CD4-positive, alpha-beta memory T cell (primary cell): ENCODE measurements at regions of chr3 and their contacts with region 1.

Region 1: GRCh38 chr3:154323891-154324738 is at the start of gene DHX36:
- DNase-seq: peak; percentile 88 to 91 (median 90)
- H3K4me3 ChIP-seq: peak within 1 kb of the TSS; percentile 86 to 89
- H3K4me3 Mint-ChIP-seq: peak within 1 kb of the TSS in 7 of 8 donors; percentile 95 to 99 (median 98)
- H3K27ac ChIP-seq: peak within 1 kb of the TSS; percentile 89
- H3K27ac Mint-ChIP-seq: peak within 1 kb of the TSS; percentile 99 to 100 (median 99)
- H3K4me1 ChIP-seq: peaks cover 49% of the 10 kb centered on the region
- H3K4me1 Mint-ChIP-seq: peaks cover 9 to 20% (median 14%) of the 10 kb centered on the region in 4 donors
- H3K27me3 ChIP-seq: no peaks in the 10 kb centered on the region
- H3K27me3 Mint-ChIP-seq: peaks cover 0 to 2% of the 10 kb centered on the region in 2 donors
- total RNA-seq, gene DHX36: 91.8 to 101 TPM

Region 2: DNA sequence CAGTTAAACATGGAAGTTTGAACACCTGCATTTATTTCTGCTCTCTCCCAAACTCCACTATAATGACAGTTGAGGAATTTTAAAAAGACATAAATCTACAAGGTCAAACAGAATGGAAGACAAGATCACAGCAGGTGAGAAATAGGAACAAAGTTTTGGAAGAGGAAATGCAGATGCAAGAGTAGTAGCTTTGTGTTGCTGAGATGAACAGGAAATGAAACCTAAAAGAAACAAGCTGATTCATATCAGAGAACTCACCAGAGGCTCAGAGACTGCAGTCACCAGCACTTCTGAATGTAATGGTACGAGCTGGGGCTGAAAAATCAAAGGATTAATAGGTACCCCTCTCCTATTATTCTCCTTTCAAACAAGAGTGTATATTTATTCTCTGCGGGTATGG is 702.2 kb before region 1 on chr3:
- CTCF ChIA-PET with region 1: no interaction called
- POLR2A ChIA-PET with region 1: no interaction called
- intact Hi-C with region 1: loop called (anchors 10 kb)
- DNase-seq: peak in 4 of 5 donors; percentile 21 to 40 (median 32)
- H3K4me3 ChIP-seq: peak overlapping the region in 1 of 2 donors; percentile 38
- H3K4me3 Mint-ChIP-seq: peak overlapping the region; percentile 46 to 84 (median 66)
- H3K27ac ChIP-seq: peak overlapping the region; percentile 14
- H3K27ac Mint-ChIP-seq: peak overlapping the region; percentile 43 to 92 (median 75)
- H3K4me1 ChIP-seq: peaks cover 60% of the 10 kb centered on the region
- H3K4me1 Mint-ChIP-seq: peaks cover 46 to 61% (median 55%) of the 10 kb centered on the region in 4 donors
- H3K27me3 ChIP-seq: no peaks in the 10 kb centered on the region
- H3K27me3 Mint-ChIP-seq: no peaks in the 10 kb centered on the region

Region 3: GRCh38 chr3:154120961-154121700 is 203.0 kb before region 1 on chr3 and contains the start of gene ARHGEF26:
- CTCF ChIA-PET with region 1: no interaction called
- POLR2A ChIA-PET with region 1: no interaction called
- intact Hi-C with region 1: loop called (anchors 5 kb)
- DNase-seq: peak; percentile 36 to 76 (median 63)
- H3K4me3 ChIP-seq: peak within 1 kb of the TSS; percentile 18 to 49
- H3K4me3 Mint-ChIP-seq: peak within 1 kb of the TSS; percentile 77 to 92 (median 84)
- H3K27ac ChIP-seq: no peak within 1 kb of the TSS
- H3K27ac Mint-ChIP-seq: peak within 1 kb of the TSS in 2 of 7 donors; percentile 17 to 32
- H3K4me1 ChIP-seq: peaks cover 16% of the 10 kb centered on the region
- H3K4me1 Mint-ChIP-seq: peaks cover 13 to 29% (median 19%) of the 10 kb centered on the region in 4 donors
- H3K27me3 ChIP-seq: peaks cover 10% of the 10 kb centered on the region
- H3K27me3 Mint-ChIP-seq: peaks cover 43 to 52% of the 10 kb centered on the region in 2 donors
- total RNA-seq, gene ARHGEF26: 0.14 to 0.17 TPM

Region 4: GRCh38 chr3:155854141-155854940 is 1530.2 kb after region 1 on chr3 and contains the start of gene SLC33A1:
- CTCF ChIA-PET with region 1: no interaction called
- POLR2A ChIA-PET with region 1: no interaction called
- intact Hi-C with region 1: loop called (anchors 1 kb)
- DNase-seq: peak; percentile 99
- H3K4me3 ChIP-seq: peak within 1 kb of the TSS; percentile 98
- H3K4me3 Mint-ChIP-seq: peak within 1 kb of the TSS; percentile 89 to 98 (median 96)
- H3K27ac ChIP-seq: peak within 1 kb of the TSS; percentile 77
- H3K27ac Mint-ChIP-seq: peak within 1 kb of the TSS; percentile 94 to 100 (median 99)
- H3K4me1 ChIP-seq: peaks cover 44% of the 10 kb centered on the region
- H3K4me1 Mint-ChIP-seq: peaks cover 27 to 58% (median 38%) of the 10 kb centered on the region in 4 donors
- H3K27me3 ChIP-seq: no peaks in the 10 kb centered on the region
- H3K27me3 Mint-ChIP-seq: no peaks in the 10 kb centered on the region
- total RNA-seq, gene SLC33A1: 44.9 to 45.8 TPM

Region 5: GRCh38 chr3:155870133-155870944 is 1546.2 kb after region 1 on chr3 and contains the start of gene GMPS:
- CTCF ChIA-PET with region 1: no interaction called
- POLR2A ChIA-PET with region 1: no interaction called
- intact Hi-C with region 1: loop called (anchors 5 kb)
- DNase-seq: peak; percentile 93 to 98 (median 96)
- H3K4me3 ChIP-seq: peak within 1 kb of the TSS; percentile 74 to 96
- H3K4me3 Mint-ChIP-seq: peak within 1 kb of the TSS; percentile 93 to 100 (median 97)
- H3K27ac ChIP-seq: peak within 1 kb of the TSS; percentile 83
- H3K27ac Mint-ChIP-seq: peak within 1 kb of the TSS; percentile 95 to 99 (median 98)
- H3K4me1 ChIP-seq: peaks cover 36% of the 10 kb centered on the region
- H3K4me1 Mint-ChIP-seq: peaks cover 11 to 44% (median 25%) of the 10 kb centered on the region in 4 donors
- H3K27me3 ChIP-seq: no peaks in the 10 kb centered on the region
- H3K27me3 Mint-ChIP-seq: no peaks in the 10 kb centered on the region
- total RNA-seq, gene GMPS: 50.5 to 53.2 TPM